Mammary epithelial cell (primary cell): ENCODE measurements at regions of chr1 and their contacts with region 1.

Region 1: DNA sequence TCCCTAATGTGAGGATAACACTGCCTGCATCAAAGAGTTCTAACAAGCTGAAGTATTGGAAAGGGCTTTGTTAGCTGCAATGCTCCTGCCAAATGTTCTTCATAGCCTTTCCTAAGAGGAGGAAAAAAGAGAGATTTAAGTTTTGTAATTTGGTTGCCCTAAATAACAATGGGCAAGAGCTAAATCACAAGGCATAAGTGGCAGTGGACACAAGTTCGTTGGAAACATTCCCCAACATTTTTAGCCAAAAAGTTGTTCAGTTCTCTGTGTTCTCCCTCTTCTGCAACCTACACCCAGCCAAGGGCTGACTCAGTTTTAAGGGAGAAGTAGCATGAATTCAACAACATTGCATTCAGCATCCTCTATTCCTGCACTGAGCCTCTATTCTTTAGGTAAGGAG is 2.6 kb upstream of the UQCRHL start:
- DNase-seq: no peak
- H3K4me3 ChIP-seq: no peak overlapping the region
- H3K27ac ChIP-seq: no peak overlapping the region
- H3K4me1 ChIP-seq: no peaks in the 10 kb centered on the region
- H3K27me3 ChIP-seq: no peaks in the 10 kb centered on the region
- CTCF ChIP-seq: no peak

Region 2: DNA sequence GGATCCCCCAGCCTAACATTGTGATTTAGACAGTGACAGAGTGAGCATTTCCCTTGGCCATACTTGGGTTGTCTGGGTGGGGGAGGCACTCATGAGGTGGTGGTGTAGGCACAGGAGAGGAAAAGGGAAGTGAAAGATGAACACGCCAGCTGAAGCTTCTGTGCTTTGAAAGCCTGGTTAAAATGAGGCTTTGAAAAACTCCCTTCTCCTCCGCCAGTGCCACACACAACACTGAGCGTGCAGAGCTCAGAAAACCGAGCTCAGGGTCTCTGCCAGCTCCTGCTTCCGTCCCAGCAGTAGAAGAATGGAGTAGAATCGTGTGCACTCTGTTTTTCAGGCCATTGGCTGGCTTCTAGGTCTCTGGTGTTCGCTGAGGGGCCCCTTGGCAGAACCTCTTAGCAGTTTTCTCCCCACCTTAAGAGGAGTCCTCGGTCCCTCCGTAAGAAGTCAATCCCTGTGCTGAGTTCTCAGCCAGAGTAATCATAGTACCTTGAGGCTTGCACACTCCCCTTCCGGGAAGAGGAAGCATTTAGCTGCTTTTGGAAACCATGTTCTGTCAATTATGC is 113.0 kb before region 1 on chr1:
- CTCF ChIA-PET with region 1: no interaction called
- dilution Hi-C with region 1: no loop called
- in situ Hi-C with region 1: no loop called
- intact Hi-C with region 1: no loop called
- DNase-seq: no peak
- H3K4me3 ChIP-seq: no peak overlapping the region
- H3K27ac ChIP-seq: no peak overlapping the region
- H3K4me1 ChIP-seq: no peaks in the 10 kb centered on the region
- H3K27me3 ChIP-seq: no peaks in the 10 kb centered on the region
- CTCF ChIP-seq: no peak

Region 3: GRCh38 chr1:15994590-15995351 is 184.7 kb after region 1 on chr1:
- CTCF ChIA-PET with region 1: no interaction called
- dilution Hi-C with region 1: no loop called
- in situ Hi-C with region 1: loop called in 1 of 2 experiments (anchors 10 kb)
- intact Hi-C with region 1: loop called (anchors 1 kb)
- DNase-seq: peak; percentile 40
- H3K4me3 ChIP-seq: no peak overlapping the region
- H3K27ac ChIP-seq: no peak overlapping the region
- H3K4me1 ChIP-seq: no peaks in the 10 kb centered on the region
- H3K27me3 ChIP-seq: no peaks in the 10 kb centered on the region
- CTCF ChIP-seq: peak; percentile 68 to 84